ENCODE measurements at regions of chr7 and their contacts with region 1.

Region 1: GRCh38 chr7:108146070-108146837 is 16.1 kb upstream of the LAMB4 start:
- DNase-seq: peak in 4 of 5 donors; percentile 53 to 60 (median 56)
- ATAC-seq: peak; percentile 67 to 91 (median 88)
- H3K4me3 ChIP-seq: peak overlapping the region in 8 of 12 donors; percentile 3 to 43 (median 28)
- H3K27ac ChIP-seq: no peak overlapping the region
- H3K4me1 ChIP-seq: peaks cover 0 to 6% (median 0%) of the 10 kb centered on the region in 12 donors
- H3K27me3 ChIP-seq: peaks cover 0 to 5% (median 0%) of the 10 kb centered on the region in 9 donors
- CTCF ChIP-seq: peak; percentile 79 to 97 (median 94)
- POLR2A ChIP-seq: no peak

Region 2: GRCh38 chr7:107879400-107880035 is 266.7 kb before region 1 on chr7:
- intact Hi-C with region 1: loop called in 9 of 10 experiments (anchors 2 to 10 kb)
- DNase-seq: no peak
- ATAC-seq: peak in 3 of 4 donors; percentile 77 to 85 (median 79)
- H3K4me3 ChIP-seq: no peak overlapping the region
- H3K27ac ChIP-seq: no peak overlapping the region
- H3K4me1 ChIP-seq: peaks cover 0 to 20% (median 0%) of the 10 kb centered on the region in 12 donors
- H3K27me3 ChIP-seq: no peaks in the 10 kb centered on the region
- CTCF ChIP-seq: peak; percentile 59 to 90 (median 68)
- POLR2A ChIP-seq: no peak

Region 3: DNA sequence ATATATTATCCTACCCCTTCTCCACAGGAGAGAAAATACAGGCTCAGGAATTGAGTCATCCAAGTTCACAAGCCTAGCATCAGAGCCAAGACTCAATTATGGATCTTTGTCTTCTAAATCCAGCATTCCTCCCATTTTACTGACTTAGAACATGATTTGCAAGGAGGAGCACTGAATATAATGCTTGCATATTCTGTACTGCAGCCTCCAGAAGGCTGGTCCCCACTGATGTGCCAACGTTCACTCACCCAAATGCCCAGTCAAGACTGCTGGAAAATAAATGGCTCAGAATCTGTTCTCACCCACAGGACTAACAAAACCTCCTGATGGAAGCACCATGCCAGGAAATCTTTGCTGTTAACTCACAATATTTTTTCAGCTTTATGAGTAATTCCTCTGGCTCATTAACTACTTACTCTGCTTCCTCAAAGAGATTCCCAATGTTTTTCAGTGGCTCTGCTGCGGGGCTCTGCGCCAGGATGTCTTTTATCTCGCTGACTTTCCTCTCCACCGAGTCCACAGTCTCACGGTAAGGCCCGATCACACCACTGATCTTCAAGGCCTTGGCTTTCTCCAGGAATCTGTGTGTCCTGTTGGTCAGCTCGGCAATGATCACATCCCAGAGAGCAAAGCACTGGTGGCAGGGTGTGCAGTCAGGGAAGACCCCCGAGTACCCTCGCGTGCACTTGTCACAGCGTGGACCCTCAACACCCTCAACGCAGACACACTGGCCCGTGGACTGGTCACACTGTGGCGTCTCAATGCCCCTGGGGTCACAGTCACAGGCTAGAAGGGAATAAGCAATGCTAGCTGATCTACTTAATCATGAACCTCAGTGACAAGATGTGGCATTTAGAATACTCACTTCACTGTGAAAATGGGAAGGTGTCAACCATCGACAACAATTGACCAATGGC is 206.4 kb before region 1 on chr7:
- intact Hi-C with region 1: loop called in 2 of 10 experiments (anchors 10 kb)
- DNase-seq: peak; percentile 58 to 73 (median 63)
- ATAC-seq: peak; percentile 27 to 67 (median 58)
- H3K4me3 ChIP-seq: no peak overlapping the region
- H3K27ac ChIP-seq: peak overlapping the region in 11 of 12 donors; percentile 31 to 85 (median 65)
- H3K4me1 ChIP-seq: peaks cover 0 to 70% (median 48%) of the 10 kb centered on the region in 12 donors
- H3K27me3 ChIP-seq: no peaks in the 10 kb centered on the region
- CTCF ChIP-seq: no peak
- POLR2A ChIP-seq: no peak

Region 4: GRCh38 chr7:108016841-108017775 is 129.1 kb before region 1 on chr7:
- intact Hi-C with region 1: loop called in 1 of 10 experiments (anchors 5 kb)
- DNase-seq: no peak
- ATAC-seq: peak in 3 of 4 donors; percentile 51 to 58 (median 54)
- H3K4me3 ChIP-seq: no peak overlapping the region
- H3K27ac ChIP-seq: no peak overlapping the region
- H3K4me1 ChIP-seq: peaks cover 0 to 18% (median 0%) of the 10 kb centered on the region in 12 donors
- H3K27me3 ChIP-seq: no peaks in the 10 kb centered on the region
- CTCF ChIP-seq: peak; percentile 23 to 59 (median 44)
- POLR2A ChIP-seq: no peak

Region 5: GRCh38 chr7:108253275-108254044 is 107.2 kb after region 1 on chr7:
- intact Hi-C with region 1: no loop called
- DNase-seq: no peak
- ATAC-seq: no peak
- H3K4me3 ChIP-seq: no peak overlapping the region
- H3K27ac ChIP-seq: no peak overlapping the region
- H3K4me1 ChIP-seq: no peaks in the 10 kb centered on the region
- H3K27me3 ChIP-seq: no peaks in the 10 kb centered on the region
- CTCF ChIP-seq: no peak
- POLR2A ChIP-seq: no peak